ENCODE measurements at regions of chrX and their contacts with region 1.

Region 1: GRCh38 chrX:8738588-8739189 is 6.8 kb upstream of the ANOS1 start:
- DNase-seq: peak; percentile 37
- H3K4me3 ChIP-seq: no peak overlapping the region
- H3K27ac ChIP-seq: no peak overlapping the region
- H3K4me1 ChIP-seq: no peaks in the 10 kb centered on the region
- H3K27me3 ChIP-seq: peaks cover 2% of the 10 kb centered on the region; the same call in 1 of the 2 replicates
- CTCF ChIP-seq: peak; percentile 84
- EP300 ChIP-seq: no peak
- RAD21 ChIP-seq: peak; percentile 72

Region 2: GRCh38 chrX:7514871-7515599 is 1223.7 kb before region 1 on chrX:
- CTCF ChIA-PET with region 1: no interaction called
- POLR2A ChIA-PET with region 1: no interaction called
- DNase-seq: no peak
- H3K4me3 ChIP-seq: no peak overlapping the region
- H3K27ac ChIP-seq: no peak overlapping the region
- H3K4me1 ChIP-seq: no peaks in the 10 kb centered on the region
- H3K27me3 ChIP-seq: no peaks in the 10 kb centered on the region
- CTCF ChIP-seq: no peak
- EP300 ChIP-seq: no peak
- RAD21 ChIP-seq: no peak

Region 3: GRCh38 chrX:7996414-7996813 is 742.3 kb before region 1 on chrX:
- CTCF ChIA-PET with region 1: interaction called, 40 read pairs
- POLR2A ChIA-PET with region 1: no interaction called
- DNase-seq: peak; percentile 30
- H3K4me3 ChIP-seq: no peak overlapping the region
- H3K27ac ChIP-seq: no peak overlapping the region
- H3K4me1 ChIP-seq: no peaks in the 10 kb centered on the region
- H3K27me3 ChIP-seq: no peaks in the 10 kb centered on the region
- CTCF ChIP-seq: peak; percentile 76
- EP300 ChIP-seq: no peak
- RAD21 ChIP-seq: peak; percentile 81

Region 4: DNA sequence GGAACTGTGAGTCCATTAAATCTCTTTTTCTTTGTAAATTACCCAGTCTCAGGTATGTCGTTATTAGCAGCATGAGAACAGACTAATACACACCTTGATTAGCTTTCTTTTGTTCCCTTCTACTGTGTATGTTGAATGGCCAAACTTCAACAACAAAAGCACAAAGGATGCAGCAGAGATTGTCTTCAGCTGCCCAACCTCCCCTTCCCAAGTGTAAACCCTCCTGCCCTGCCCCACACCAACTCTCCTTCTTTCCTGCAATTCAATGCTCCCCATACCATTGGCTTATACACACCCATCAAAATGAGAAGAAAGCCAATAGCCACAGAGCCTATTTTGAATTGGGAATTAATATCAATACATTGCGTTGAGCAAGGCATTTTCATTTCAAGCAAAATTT is 34.5 kb before region 1 on chrX:
- CTCF ChIA-PET with region 1: interaction called, 11 read pairs
- POLR2A ChIA-PET with region 1: no interaction called
- DNase-seq: no peak
- H3K4me3 ChIP-seq: no peak overlapping the region
- H3K27ac ChIP-seq: no peak overlapping the region
- H3K4me1 ChIP-seq: no peaks in the 10 kb centered on the region
- H3K27me3 ChIP-seq: no peaks in the 10 kb centered on the region
- CTCF ChIP-seq: no peak
- EP300 ChIP-seq: no peak
- RAD21 ChIP-seq: no peak

Region 5: DNA sequence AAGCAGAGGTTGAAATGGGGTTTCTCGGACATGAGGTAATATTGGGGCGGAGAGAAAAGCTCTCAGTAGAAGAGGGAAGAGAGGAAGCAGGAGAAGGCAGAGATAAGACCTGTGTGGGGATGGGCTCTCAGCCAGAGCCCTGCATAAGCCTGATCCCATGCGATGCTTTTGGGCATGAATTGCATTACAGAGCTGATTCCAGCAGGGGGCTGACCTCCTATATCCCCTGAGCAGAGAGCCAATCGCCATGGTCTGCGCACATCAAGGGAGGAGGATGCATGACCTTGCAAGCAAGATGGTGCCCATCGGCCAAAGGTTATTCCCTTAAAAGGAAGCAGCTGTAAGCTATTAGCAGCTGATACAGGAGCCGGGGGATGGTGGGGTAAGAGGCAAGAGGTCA is 14.4 kb before region 1 on chrX:
- CTCF ChIA-PET with region 1: interaction called, 16 read pairs
- POLR2A ChIA-PET with region 1: no interaction called
- DNase-seq: peak; percentile 34
- H3K4me3 ChIP-seq: no peak overlapping the region
- H3K27ac ChIP-seq: no peak overlapping the region
- H3K4me1 ChIP-seq: no peaks in the 10 kb centered on the region
- H3K27me3 ChIP-seq: no peaks in the 10 kb centered on the region
- CTCF ChIP-seq: peak; percentile 21
- EP300 ChIP-seq: no peak
- RAD21 ChIP-seq: no peak

Region 6: DNA sequence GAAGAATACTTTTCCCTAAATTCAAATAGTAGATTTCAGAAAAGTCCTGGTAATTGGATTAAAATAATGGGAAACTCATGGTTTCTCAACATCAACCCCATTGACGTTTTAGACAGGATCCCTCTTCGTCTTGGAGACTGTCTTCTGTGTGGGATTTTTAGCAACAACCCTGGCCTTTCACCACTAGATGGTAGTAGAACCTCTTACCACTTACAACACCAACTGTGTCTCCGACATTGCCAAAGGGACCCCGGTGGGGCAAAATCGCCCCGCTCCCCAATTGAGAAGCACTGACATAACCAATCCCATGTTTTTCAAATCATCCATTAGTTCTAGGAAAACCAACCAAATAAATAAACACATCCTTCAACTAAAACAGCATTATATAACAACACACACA is 10.2 kb after region 1 on chrX:
- CTCF ChIA-PET with region 1: interaction called, 31 read pairs
- POLR2A ChIA-PET with region 1: no interaction called
- DNase-seq: peak; percentile 47
- H3K4me3 ChIP-seq: no peak overlapping the region
- H3K27ac ChIP-seq: no peak overlapping the region
- H3K4me1 ChIP-seq: no peaks in the 10 kb centered on the region
- H3K27me3 ChIP-seq: no peaks in the 10 kb centered on the region; the same call in 1 of the 2 replicates
- CTCF ChIP-seq: peak; percentile 66
- EP300 ChIP-seq: no peak
- RAD21 ChIP-seq: peak; percentile 57

Region 7: GRCh38 chrX:8755116-8755515 is 16.4 kb after region 1 on chrX:
- CTCF ChIA-PET with region 1: interaction called, 31 read pairs
- POLR2A ChIA-PET with region 1: no interaction called
- DNase-seq: no peak
- H3K4me3 ChIP-seq: no peak overlapping the region
- H3K27ac ChIP-seq: no peak overlapping the region
- H3K4me1 ChIP-seq: no peaks in the 10 kb centered on the region
- H3K27me3 ChIP-seq: no peaks in the 10 kb centered on the region
- CTCF ChIP-seq: no peak
- EP300 ChIP-seq: no peak
- RAD21 ChIP-seq: no peak

Region 8: GRCh38 chrX:9578083-9578779 is 839.5 kb after region 1 on chrX:
- CTCF ChIA-PET with region 1: no interaction called
- POLR2A ChIA-PET with region 1: no interaction called
- DNase-seq: peak; percentile 58
- H3K4me3 ChIP-seq: no peak overlapping the region
- H3K27ac ChIP-seq: peak overlapping the region in 1 of 2 experiments; percentile 30; a peak in 1 of 4 replicates
- H3K4me1 ChIP-seq: peaks cover 0 to 17% of the 10 kb centered on the region in 2 experiments; a peak in 1 of 4 replicates
- H3K27me3 ChIP-seq: no peaks in the 10 kb centered on the region; the same call in 1 of the 2 replicates
- CTCF ChIP-seq: no peak
- EP300 ChIP-seq: no peak
- RAD21 ChIP-seq: no peak

Measured in SK-N-SH (cell line).